ENCODE measurements at regions of chr1 and their contacts with region 1.

Region 1: DNA sequence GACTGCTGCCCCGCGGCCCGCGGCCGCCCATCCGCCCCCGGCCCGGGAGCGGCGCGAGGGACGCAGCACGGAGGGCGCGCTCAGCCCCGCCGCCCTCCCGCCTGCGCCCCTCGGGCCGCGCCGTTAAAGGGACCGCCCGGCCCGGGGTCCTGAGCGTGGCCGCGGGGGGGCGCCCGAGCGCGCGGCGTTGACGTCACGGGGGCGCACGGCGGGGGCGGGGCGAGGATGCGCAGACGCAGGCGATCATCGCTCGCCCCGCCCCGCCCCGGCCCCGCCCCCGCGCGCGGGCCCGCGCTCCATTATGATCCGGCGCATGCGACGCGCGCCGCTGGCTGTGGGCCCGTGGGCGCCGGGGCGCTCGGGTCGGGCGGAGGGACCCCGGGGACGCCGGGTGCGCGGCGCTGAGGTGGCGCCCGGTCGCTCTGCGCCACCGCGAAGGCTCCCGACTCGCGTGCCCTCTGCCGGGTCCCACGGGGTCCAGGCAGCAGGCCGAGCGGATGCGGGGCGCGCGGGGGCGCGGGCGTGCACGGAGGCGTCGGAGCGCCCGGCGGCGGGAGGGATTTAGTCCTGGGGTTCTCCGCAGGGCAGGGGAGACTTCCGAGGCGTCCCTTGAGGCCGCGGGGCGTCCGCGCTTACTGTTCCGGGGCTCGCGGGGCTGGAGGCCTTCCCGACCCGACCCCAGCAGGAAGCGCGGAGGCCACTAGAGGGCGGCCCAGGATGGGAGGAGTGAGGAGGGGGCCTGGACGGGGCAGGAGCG is at the start of gene DVL1:
- DNase-seq: peak; percentile 80
- H3K4me3 ChIP-seq: peak within 1 kb of the TSS; percentile 78
- H3K27ac ChIP-seq: peak within 1 kb of the TSS; percentile 64
- H3K4me1 ChIP-seq: peaks cover 31% of the 10 kb centered on the region
- CTCF ChIP-seq: peak; percentile 60
- total RNA-seq, gene DVL1: 41.7 and 47.1 TPM in 2 replicates

Region 2: DNA sequence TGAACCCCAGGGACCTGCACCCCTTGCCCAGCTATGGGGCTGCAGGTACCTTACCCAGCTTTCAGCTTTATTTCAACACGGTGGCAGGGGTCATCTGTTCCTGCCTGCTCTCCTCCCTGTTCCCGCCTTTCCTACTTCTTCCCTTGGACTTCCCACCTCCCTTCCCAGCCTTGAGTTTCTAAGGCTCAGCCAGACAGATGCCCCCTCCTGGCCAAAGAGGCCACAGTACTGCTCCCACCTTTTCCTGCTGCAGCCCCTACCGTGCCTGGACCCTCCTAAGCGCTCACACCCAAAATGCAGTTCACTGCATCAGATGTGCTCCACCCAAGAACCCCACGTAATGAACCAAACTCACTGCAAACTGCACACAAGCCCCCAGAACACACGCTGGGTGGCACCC is 398.1 kb before region 1 on chr1:
- CTCF ChIA-PET with region 1: no interaction called
- POLR2A ChIA-PET with region 1: no interaction called
- intact Hi-C with region 1: no loop called
- DNase-seq: no peak
- H3K4me3 ChIP-seq: no peak overlapping the region
- H3K27ac ChIP-seq: no peak overlapping the region
- H3K4me1 ChIP-seq: no peaks in the 10 kb centered on the region
- CTCF ChIP-seq: peak; percentile 37

Region 3: GRCh38 chr1:1281533-1282321 is 67.7 kb before region 1 on chr1:
- CTCF ChIA-PET with region 1: no interaction called
- POLR2A ChIA-PET with region 1: no interaction called
- intact Hi-C with region 1: no loop called
- DNase-seq: no peak
- H3K4me3 ChIP-seq: no peak overlapping the region
- H3K27ac ChIP-seq: no peak overlapping the region
- H3K4me1 ChIP-seq: no peaks in the 10 kb centered on the region
- CTCF ChIP-seq: no peak

Region 4: GRCh38 chr1:1361982-1362423 is 12.6 kb after region 1 on chr1:
- CTCF ChIA-PET with region 1: no interaction called
- POLR2A ChIA-PET with region 1: no interaction called
- intact Hi-C with region 1: no loop called
- DNase-seq: no peak
- H3K4me3 ChIP-seq: no peak overlapping the region
- H3K27ac ChIP-seq: no peak overlapping the region
- H3K4me1 ChIP-seq: no peaks in the 10 kb centered on the region
- CTCF ChIP-seq: no peak

Region 5: DNA sequence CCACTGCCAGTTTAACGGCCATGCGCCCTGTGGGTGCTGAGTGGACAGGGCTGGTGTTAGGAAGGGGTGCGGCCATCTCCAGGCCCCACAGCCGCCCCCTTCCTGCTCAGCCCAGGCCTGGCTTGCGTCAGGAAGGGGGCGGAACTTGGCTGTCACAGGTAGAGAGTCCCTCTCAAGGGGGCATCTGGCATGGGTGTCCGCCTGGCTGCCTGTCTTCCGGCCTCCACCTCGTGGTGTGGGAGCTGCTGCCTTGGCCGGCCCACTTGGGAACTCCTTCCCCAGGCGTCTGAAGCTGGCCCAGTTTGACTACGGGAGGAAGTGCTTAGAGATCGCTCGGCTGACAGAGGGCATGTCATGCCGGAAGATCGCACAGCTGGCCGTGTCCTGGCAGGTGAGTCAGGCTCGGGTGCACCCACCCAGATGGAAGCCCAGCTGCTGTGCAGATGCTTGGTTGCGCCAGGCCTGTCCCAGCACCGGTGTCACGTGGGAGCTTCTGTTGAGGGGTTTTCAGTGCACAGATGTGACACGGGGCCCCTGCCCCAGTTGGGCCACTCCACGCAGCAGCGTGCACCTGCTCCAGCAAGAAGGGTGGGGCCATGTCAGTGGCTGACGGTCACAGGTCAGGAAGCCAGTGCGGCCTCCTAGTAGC is 113.0 kb after region 1 on chr1:
- CTCF ChIA-PET with region 1: no interaction called
- POLR2A ChIA-PET with region 1: no interaction called
- intact Hi-C with region 1: loop called (anchors 5 kb)
- DNase-seq: peak; percentile 89
- H3K4me3 ChIP-seq: peak overlapping the region; percentile 33
- H3K27ac ChIP-seq: peak overlapping the region; percentile 77
- H3K4me1 ChIP-seq: peaks cover 22% of the 10 kb centered on the region
- CTCF ChIP-seq: no peak

Measured in OCI-LY7 (cell line).